GM12878 (cell line): ENCODE measurements at regions of chr19 and their contacts with region 1.

Region 1: DNA sequence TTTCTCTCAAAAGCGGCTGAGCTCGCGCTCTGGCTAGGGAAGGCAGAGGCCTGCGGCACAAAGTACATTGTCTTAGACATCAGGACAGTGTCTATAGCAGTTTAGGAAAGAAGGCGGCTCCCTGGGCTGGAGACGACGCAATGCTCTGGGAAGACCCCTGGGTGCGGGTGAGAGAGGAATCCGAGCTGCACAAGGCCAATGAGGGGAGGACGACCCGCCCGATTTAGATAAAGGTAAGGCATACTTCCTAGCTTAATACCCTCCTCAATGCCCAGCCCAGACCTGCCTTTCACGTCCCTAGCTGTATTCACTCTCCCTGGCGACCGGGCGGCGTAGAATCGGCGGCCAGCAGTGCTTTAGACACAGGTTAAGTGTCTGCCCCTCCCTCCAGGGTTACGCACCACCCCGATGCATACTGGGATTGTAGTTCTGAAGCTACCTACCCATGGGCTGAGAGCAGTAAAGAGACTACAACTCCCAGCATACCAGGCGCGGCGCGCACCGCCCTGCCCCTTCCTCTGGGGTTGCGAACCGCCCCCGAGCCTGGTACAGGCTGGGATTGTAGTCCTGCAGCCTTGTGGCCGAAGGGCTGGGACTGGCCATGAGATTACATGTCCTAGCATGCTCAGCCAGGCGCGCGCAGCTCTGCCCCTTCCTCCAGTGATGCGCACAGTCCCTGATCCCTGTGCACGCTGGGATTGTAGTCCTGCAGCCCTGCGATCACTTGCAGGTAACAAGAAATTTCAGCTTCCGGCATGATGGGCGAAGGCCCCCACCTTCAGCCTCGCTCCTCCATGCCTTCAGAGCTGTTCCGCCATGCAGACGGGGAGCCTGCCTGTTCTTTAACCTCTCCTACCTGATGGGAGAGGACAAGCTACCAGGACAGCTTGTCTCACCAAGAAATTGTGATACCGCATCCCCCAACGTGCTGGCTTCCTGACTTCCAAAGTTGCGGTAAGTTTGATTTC is 43.4 kb upstream of the ZNF14 start:
- DNase-seq: peak; percentile 96
- ATAC-seq: peak; percentile 99
- H3K4me3 ChIP-seq: peak overlapping the region; percentile 78
- H3K27ac ChIP-seq: peak overlapping the region; percentile 68
- H3K4me1 ChIP-seq: no peaks in the 10 kb centered on the region
- H3K27me3 ChIP-seq: no peaks in the 10 kb centered on the region
- CTCF ChIP-seq: peak in 1 of 3 experiments; percentile 8; a peak in 1 of 6 replicates
- EP300 ChIP-seq: no peak
- POLR2A ChIP-seq: peak; percentile 77
- RAD21 ChIP-seq: no peak

Region 2: GRCh38 chr19:19719798-19720197 is 56.5 kb before region 1 on chr19:
- CTCF ChIA-PET with region 1: no interaction called
- POLR2A ChIA-PET with region 1: no interaction called
- RAD21 ChIA-PET with region 1: no interaction called
- SMC1A ChIA-PET with region 1: no interaction called
- in situ Hi-C with region 1: no loop called
- intact Hi-C with region 1: no loop called
- DNase-seq: no peak
- ATAC-seq: no peak
- H3K4me3 ChIP-seq: no peak overlapping the region
- H3K27ac ChIP-seq: no peak overlapping the region
- H3K4me1 ChIP-seq: no peaks in the 10 kb centered on the region
- H3K27me3 ChIP-seq: no peaks in the 10 kb centered on the region
- CTCF ChIP-seq: no peak
- EP300 ChIP-seq: no peak
- POLR2A ChIP-seq: no peak
- RAD21 ChIP-seq: no peak

Region 3: GRCh38 chr19:19745496-19746285 is 30.6 kb before region 1 on chr19:
- CTCF ChIA-PET with region 1: no interaction called
- POLR2A ChIA-PET with region 1: no interaction called
- RAD21 ChIA-PET with region 1: no interaction called
- SMC1A ChIA-PET with region 1: no interaction called
- in situ Hi-C with region 1: no loop called
- intact Hi-C with region 1: no loop called
- DNase-seq: no peak
- ATAC-seq: no peak
- H3K4me3 ChIP-seq: no peak overlapping the region
- H3K27ac ChIP-seq: no peak overlapping the region
- H3K4me1 ChIP-seq: no peaks in the 10 kb centered on the region
- H3K27me3 ChIP-seq: no peaks in the 10 kb centered on the region
- CTCF ChIP-seq: no peak
- EP300 ChIP-seq: no peak
- POLR2A ChIP-seq: no peak
- RAD21 ChIP-seq: no peak

Region 4: DNA sequence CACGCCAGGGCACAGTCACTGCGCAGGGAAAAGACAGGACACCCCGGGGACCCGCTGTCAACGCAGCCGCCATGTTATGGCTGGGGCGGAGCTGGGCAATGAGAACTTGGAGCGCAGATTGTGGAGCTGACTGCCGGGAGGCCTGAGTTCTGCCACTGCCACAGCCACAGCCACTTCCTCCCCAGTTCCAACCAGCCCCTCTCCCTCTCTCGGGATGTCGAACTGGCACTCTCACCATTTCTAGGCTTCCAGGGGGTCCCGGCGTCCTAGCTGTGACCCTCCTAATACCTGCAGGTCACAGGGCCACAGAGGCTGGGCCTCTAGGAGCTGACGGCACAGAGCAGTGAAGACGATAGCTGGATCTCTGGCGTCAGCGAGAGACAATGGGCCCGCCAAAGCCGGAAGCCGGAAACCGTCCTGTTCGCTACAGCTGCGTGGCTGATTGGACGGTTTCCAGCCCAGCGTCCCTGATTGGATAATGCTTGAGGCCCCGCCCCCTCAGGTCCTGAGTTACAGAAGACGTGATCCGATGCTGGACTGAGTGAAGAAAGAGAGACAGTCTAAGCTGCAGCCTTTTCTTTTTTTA is 45.1 kb after region 1 on chr19 and contains the start of gene ZNF506:
- CTCF ChIA-PET with region 1: interaction called, 4 read pairs
- POLR2A ChIA-PET with region 1: interaction called, 9 read pairs
- RAD21 ChIA-PET with region 1: interaction called, 14 read pairs
- SMC1A ChIA-PET with region 1: interaction called, 13 read pairs
- in situ Hi-C with region 1: no loop called
- intact Hi-C with region 1: no loop called
- DNase-seq: peak; percentile 70
- ATAC-seq: peak; percentile 96
- H3K4me3 ChIP-seq: peak within 1 kb of the TSS; percentile 90
- H3K27ac ChIP-seq: peak within 1 kb of the TSS; percentile 96
- H3K4me1 ChIP-seq: peaks cover 2% of the 10 kb centered on the region; the same call in 1 of the 2 replicates
- H3K27me3 ChIP-seq: no peaks in the 10 kb centered on the region
- CTCF ChIP-seq: no peak
- EP300 ChIP-seq: no peak
- POLR2A ChIP-seq: peak; percentile 97
- RAD21 ChIP-seq: no peak
- polyA plus RNA-seq, gene ZNF506: 3.5 to 4.0 TPM